Common myeloid progenitor, CD34-positive (primary cell): ENCODE measurements at regions of chr14 and their contacts with region 1.

Region 1: DNA sequence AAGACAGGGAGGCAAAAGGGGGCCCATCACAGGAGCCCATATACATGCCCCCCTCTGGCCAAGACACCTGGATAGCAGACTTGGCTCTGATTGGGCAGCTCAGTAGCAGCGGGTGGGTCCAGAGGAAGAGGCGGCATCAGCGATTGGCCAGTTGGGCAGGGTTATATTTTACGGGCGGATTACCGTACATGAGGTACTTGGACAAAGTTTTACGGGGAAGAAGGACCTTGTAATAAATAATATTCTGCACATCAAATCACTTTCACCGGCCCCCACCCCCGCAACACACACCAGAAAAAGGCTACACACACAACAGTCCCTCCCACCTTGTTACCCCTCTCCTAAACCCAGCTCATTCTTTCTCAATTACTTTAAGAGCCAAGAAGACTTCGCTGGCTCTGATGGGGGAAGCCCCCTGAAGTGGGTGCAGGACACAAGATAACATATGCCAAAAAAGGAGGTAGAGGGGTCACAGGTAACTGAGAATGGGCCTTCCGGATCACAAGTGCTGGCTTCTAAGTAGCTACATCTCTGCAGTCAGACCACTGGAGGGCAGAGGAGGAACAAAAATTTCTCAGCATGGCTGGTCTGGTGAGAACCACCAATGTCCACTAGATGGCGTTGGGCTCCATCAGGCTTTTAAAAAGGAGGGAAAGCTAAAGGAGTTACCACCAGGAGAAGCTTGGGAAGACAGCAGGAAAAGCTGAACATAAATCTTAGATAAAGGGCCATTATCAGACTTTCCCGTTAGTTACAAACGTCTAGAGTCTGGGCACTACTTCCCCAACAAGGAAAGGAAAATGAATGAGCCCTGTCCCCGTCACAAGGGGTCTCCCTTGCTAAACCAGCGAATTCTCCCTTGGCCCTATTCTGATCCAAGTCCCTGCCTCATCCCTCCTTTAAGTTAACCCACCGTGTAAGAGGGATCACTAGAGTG is 11.4 kb upstream of the CDH24 start:
- DNase-seq: peak; percentile 84 to 91 (median 89)
- H3K4me3 ChIP-seq: no peak overlapping the region
- H3K27ac ChIP-seq: no peak overlapping the region
- H3K4me1 ChIP-seq: peaks cover 0 to 33% (median 28%) of the 10 kb centered on the region in 4 experiments
- H3K27me3 ChIP-seq: no peaks in the 10 kb centered on the region

Region 2: GRCh38 chr14:23085458-23085857 is 16.7 kb after region 1 on chr14:
- CTCF ChIA-PET with region 1: interaction called, 153 read pairs
- POLR2A ChIA-PET with region 1: interaction called, 3 read pairs
- DNase-seq: no peak
- H3K4me3 ChIP-seq: no peak overlapping the region
- H3K27ac ChIP-seq: no peak overlapping the region
- H3K4me1 ChIP-seq: no peaks in the 10 kb centered on the region
- H3K27me3 ChIP-seq: no peaks in the 10 kb centered on the region

Region 3: DNA sequence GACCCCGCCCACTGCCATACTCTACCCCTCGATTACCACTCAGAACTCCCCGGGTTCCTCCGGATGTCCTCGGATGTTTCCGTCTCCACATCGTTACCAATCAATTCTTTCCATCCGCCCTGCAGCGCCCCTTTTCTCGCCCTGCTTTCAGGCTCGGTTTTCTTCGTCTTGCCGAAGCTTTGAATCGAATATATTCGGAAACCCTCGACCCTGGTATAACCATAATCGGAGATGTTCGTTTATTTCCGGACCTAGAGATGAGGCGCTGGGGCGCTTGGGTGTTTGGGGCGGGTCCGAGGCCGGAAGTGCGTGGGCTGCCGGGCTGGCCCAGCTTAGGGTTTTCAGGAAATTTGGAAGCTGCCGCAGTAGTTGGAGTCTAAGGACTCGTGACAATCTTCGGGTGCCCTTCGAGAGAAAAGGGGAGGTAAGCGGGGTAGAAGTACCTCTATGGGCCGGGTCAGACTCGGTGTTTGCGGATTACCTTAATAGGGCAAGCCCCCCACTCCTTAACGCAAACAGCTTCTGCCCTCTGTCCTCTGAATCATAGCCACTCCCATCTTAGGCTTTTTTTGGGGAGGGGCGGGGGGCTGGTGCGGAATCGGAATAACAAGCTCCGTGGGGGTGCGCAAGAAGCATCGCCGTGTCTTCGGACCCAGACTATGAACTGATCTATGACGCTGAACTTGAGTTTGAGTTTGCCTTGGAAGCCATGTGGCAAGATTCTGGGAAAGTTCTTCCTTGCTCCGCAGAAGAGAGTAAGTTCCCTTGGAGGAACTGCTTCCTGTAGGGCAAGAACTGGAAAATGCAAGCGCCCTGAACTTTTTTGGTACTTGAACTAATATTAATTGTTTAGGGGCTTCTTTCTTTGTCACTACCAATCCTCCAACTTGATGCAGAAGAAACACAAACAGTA is 26.7 kb after region 1 on chr14 and contains the start of gene C14orf119:
- CTCF ChIA-PET with region 1: interaction called, 153 read pairs
- POLR2A ChIA-PET with region 1: interaction called, 3 read pairs
- DNase-seq: peak; percentile 100
- H3K4me3 ChIP-seq: peak within 1 kb of the TSS; percentile 85 to 100 (median 96)
- H3K27ac ChIP-seq: peak within 1 kb of the TSS; percentile 98 to 99
- H3K4me1 ChIP-seq: peaks cover 15 to 33% (median 20%) of the 10 kb centered on the region in 4 experiments
- H3K27me3 ChIP-seq: no peaks in the 10 kb centered on the region

Region 4: GRCh38 chr14:23114669-23115491 is 46.1 kb after region 1 on chr14:
- CTCF ChIA-PET with region 1: interaction called, 200 read pairs
- POLR2A ChIA-PET with region 1: interaction called, 3 read pairs
- DNase-seq: no peak
- H3K4me3 ChIP-seq: no peak overlapping the region
- H3K27ac ChIP-seq: no peak overlapping the region
- H3K4me1 ChIP-seq: peaks cover 2 to 43% (median 30%) of the 10 kb centered on the region in 4 experiments
- H3K27me3 ChIP-seq: peaks cover 0 to 4% (median 0%) of the 10 kb centered on the region in 5 experiments